ENCODE measurements at regions of chrX and their contacts with region 1.

Region 1: DNA sequence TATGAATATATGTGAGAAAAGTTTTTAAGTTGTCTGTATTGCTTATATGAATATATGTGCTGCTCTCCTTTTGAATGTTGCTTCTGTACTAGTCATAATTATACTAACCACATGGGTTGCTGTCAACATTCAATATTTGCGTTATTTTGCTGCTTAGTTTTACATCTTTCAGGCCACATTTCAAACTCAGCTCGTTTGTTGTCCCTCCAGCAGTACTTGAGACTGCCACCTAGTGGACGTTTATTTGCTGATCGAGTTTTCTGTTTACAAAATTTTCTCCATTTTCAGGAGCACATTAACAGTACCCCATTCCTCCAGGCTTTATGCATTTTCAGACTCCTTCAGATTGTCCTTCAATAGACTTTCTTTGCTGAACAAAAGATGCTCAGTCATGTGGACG is 75.8 kb downstream of the NUDT11 start:
- DNase-seq: peak in 5 of 7 donors; percentile 10 to 37 (median 34)
- H3K4me3 ChIP-seq: no peak overlapping the region
- H3K27ac ChIP-seq: no peak overlapping the region
- H3K4me1 ChIP-seq: no peaks in the 10 kb centered on the region
- H3K27me3 ChIP-seq: peaks cover 8% of the 10 kb centered on the region
- CTCF ChIP-seq: peak; percentile 42 to 86 (median 56)
- POLR2A ChIP-seq: no peak

Region 2: DNA sequence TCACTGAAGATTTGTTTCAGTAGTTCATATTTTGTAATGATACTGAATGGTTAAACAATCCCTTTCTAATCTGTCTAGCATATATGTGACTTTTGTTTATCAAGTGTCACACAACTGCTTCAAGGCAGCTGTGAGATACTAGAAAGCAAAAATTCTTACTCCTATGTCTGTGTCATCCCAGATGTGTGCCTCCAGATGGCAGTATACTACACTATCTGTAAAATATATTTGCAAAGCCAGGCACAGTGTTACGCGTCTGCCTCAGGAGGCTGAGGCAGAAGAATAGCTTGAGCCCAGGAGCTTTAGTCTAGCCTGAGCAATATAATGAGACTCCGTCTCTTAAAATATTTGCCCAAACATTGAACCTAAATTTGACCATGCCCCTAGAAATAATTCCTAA is 84.0 kb before region 1 on chrX:
- intact Hi-C with region 1: loop called in 1 of 2 experiments (anchors 5 kb)
- DNase-seq: peak; percentile 22 to 65 (median 50)
- H3K4me3 ChIP-seq: no peak overlapping the region
- H3K27ac ChIP-seq: no peak overlapping the region
- H3K4me1 ChIP-seq: no peaks in the 10 kb centered on the region
- H3K27me3 ChIP-seq: peaks cover 5% of the 10 kb centered on the region
- CTCF ChIP-seq: peak; percentile 37 to 69 (median 60)
- POLR2A ChIP-seq: no peak

Region 3: DNA sequence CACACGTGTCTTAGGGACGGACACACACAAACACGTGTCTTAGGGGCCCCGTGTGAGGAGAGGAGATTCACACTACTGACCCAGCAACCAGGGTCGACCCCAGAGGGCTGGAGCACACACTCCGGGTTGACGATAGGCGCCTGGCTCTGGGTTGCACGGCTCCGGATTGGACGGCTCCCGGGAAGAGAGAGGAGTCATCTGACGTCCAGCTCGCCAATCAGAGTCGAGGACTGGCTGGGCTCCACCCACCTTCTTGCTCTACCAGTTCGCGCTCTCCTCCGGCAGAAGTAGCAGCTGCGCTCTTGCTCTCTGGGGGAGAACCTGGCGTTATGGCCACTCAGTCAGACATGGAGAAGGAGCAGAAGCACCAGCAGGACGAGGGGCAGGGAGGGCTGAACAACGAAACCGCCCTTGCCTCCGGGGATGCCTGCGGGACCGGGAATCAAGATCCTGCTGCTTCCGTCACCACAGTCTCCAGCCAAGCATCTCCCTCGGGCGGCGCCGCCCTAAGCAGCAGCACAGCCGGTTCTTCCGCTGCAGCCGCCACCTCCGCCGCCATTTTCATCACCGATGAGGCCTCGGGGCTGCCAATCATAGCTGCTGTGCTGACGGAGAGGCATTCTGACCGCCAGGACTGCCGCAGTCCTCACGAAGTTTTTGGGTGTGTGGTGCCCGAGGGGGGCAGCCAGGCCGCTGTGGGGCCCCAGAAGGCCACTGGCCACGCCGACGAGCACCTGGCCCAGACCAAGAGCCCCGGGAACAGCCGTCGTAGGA is 13.7 kb before region 1 on chrX:
- intact Hi-C with region 1: no loop called
- DNase-seq: no peak
- H3K4me3 ChIP-seq: no peak overlapping the region
- H3K27ac ChIP-seq: no peak overlapping the region
- H3K4me1 ChIP-seq: no peaks in the 10 kb centered on the region
- H3K27me3 ChIP-seq: peaks cover 17% of the 10 kb centered on the region
- CTCF ChIP-seq: no peak
- POLR2A ChIP-seq: no peak